Endothelial cell of umbilical vein (primary cell): ENCODE measurements at regions of chr1 and their contacts with region 1.

Region 1: DNA sequence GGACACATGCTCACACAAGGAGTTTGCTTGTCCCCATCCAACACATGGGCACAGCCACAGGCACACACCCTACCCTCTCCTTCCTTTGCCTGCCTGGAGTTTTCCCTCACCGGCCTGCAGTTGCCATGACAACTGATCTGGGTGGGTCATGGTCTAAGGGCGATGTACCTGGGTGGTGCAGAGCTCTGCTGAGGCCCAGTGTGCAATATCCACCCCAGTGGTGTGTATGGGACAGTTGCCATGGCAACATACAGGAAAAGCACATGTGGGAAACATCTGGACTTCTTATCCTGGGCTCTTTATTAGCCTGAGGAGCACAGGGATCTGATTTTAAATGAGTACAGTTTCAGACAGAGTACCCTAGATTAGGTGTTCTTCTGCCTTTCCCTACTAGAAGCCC is 98.8 kb downstream of the NAV1 start:
- DNase-seq: no peak
- H3K4me3 ChIP-seq: no peak overlapping the region
- H3K27ac ChIP-seq: peak overlapping the region; percentile 91
- H3K4me1 ChIP-seq: peaks cover 56% of the 10 kb centered on the region
- H3K27me3 ChIP-seq: no peaks in the 10 kb centered on the region
- CTCF ChIP-seq: no peak
- POLR2A ChIP-seq: no peak

Region 2: DNA sequence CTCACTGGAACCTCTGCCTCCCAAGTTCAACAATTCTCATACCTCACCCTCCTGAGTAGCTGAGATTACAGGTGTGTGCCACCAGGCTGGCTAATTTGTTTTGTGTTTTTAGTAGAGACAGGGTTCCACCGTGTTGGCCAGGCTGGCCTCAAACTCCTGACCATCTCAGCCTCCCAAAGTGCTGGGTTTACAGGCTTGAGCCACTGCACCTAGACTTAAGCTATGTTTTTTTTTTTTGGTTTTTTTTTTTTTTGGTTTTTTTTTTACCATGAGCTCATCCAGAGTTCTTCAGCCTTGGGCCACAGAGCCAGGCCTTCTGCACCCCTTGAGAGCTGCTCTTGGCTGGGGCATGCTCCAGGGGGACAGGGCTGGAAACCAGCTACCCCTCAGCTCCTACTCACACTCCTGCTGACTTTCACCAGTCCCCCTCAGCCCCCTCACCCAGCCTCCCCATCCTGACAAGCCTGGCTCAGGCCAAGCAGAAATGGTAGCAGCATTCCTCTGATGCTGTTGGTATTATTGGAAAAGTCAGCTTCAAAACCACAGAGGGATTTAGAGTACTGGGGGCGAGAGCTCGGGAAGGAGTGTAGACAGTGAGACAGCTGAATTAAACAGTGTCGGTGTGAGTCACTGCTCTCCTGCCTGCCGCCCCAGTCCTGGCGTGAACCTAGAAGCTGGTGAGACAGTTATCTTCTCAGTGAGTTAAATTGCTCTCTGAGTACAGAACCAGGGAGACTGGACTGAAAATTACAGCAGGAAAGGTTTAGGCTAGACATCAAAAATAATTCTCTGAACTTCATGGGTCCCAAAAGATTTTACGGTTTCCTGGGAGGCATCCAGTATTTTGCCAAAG is 35.0 kb before region 1 on chr1:
- CTCF ChIA-PET with region 1: interaction called, 7 read pairs
- POLR2A ChIA-PET with region 1: no interaction called
- dilution Hi-C with region 1: no loop called
- intact Hi-C with region 1: loop called (anchors 1 kb)
- DNase-seq: peak; percentile 42
- H3K4me3 ChIP-seq: no peak overlapping the region
- H3K27ac ChIP-seq: peak overlapping the region; percentile 58
- H3K4me1 ChIP-seq: peaks cover 37% of the 10 kb centered on the region
- H3K27me3 ChIP-seq: no peaks in the 10 kb centered on the region
- CTCF ChIP-seq: no peak
- POLR2A ChIP-seq: no peak

Region 3: GRCh38 chr1:201608635-201609395 is 28.9 kb before region 1 on chr1:
- CTCF ChIA-PET with region 1: interaction called, 4 read pairs
- POLR2A ChIA-PET with region 1: no interaction called
- dilution Hi-C with region 1: no loop called
- intact Hi-C with region 1: loop called (anchors 1 kb)
- DNase-seq: peak; percentile 17
- H3K4me3 ChIP-seq: no peak overlapping the region
- H3K27ac ChIP-seq: peak overlapping the region; percentile 20
- H3K4me1 ChIP-seq: peaks cover 29% of the 10 kb centered on the region
- H3K27me3 ChIP-seq: no peaks in the 10 kb centered on the region
- CTCF ChIP-seq: no peak
- POLR2A ChIP-seq: no peak

Region 4: GRCh38 chr1:201614262-201615015 is 23.2 kb before region 1 on chr1:
- CTCF ChIA-PET with region 1: interaction called, 3 read pairs
- POLR2A ChIA-PET with region 1: no interaction called
- dilution Hi-C with region 1: no loop called
- intact Hi-C with region 1: loop called (anchors 1 kb)
- DNase-seq: peak; percentile 35
- H3K4me3 ChIP-seq: no peak overlapping the region
- H3K27ac ChIP-seq: no peak overlapping the region
- H3K4me1 ChIP-seq: peaks cover 14% of the 10 kb centered on the region
- H3K27me3 ChIP-seq: no peaks in the 10 kb centered on the region
- CTCF ChIP-seq: no peak
- POLR2A ChIP-seq: no peak

Region 5: DNA sequence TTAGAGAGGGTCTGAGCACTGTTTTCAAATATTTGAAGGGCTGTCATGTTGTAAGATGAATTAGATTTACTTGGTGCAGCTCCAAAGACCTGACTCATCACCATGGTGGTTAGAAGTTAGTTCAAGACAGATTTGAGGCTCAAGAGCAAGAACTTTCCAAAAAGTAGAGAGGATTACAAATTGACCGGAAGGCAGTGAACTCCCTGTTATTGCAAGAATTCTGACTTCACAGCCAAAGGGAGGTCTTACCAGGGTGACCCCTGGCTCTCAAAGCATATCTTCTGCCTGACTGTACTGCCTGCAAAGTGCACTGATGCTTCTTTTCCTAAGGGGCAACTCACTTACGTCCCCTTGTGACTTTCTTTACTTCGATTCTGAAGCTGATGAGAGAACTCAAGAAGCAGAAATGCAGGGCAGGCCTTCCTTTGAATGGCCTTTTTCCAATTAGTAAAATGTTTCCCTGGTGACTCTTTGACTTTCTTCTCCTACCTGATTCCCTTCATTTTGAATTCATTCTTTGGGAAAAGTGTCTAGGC is 12.4 kb before region 1 on chr1:
- CTCF ChIA-PET with region 1: interaction called, 13 read pairs
- POLR2A ChIA-PET with region 1: no interaction called
- dilution Hi-C with region 1: no loop called
- intact Hi-C with region 1: no loop called
- DNase-seq: peak; percentile 46
- H3K4me3 ChIP-seq: no peak overlapping the region
- H3K27ac ChIP-seq: no peak overlapping the region
- H3K4me1 ChIP-seq: peaks cover 3% of the 10 kb centered on the region
- H3K27me3 ChIP-seq: no peaks in the 10 kb centered on the region
- CTCF ChIP-seq: no peak
- POLR2A ChIP-seq: no peak

Region 6: DNA sequence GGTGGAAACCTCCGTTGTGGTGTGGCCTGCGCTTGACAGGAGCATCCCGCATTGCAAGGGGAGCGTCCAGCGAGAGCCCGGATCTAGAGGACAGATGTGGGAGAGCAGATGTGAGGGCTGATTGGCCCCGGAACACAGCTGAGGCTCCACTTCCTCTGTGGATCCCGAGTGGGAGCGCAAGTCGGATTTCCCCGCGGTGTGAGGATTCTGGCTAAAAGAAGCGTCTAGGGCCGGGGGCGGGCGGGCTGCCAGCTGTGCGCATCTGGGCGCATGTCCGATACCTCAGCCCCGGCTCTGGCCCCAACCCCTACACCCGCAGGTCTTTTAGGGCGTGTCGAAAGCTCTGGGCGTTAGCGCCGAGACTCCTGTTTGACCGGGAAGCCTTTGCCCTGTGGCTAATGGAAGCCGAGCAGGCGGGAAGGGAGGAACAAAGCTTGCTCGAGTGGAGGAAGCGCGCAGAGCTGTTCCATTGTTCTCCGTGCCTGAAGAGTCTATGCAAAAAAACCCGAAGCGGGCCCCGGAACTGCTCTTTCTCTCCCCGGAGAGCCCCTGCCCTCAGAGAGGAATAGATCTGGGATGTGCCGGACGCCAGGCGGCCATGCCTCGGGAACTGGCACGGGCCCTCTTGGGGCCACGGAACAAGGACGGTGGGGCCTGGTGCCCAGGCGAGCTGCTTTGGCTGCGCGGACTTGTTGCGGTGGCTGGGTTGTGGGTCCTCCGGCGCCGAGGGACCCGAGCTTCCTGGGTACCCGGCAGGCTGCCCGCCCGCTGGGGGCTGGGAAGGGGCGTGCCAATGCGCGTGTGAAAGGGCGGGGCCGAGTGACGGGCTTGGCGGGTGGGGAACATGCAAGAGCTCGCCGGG is 12.3 kb after region 1 on chr1:
- CTCF ChIA-PET with region 1: interaction called, 22 read pairs
- POLR2A ChIA-PET with region 1: interaction called, 6 read pairs
- dilution Hi-C with region 1: no loop called
- intact Hi-C with region 1: loop called (anchors 1 kb)
- DNase-seq: peak; percentile 65
- H3K4me3 ChIP-seq: peak overlapping the region; percentile 30 to 57 (median 49)
- H3K27ac ChIP-seq: peak overlapping the region; percentile 50
- H3K4me1 ChIP-seq: peaks cover 30% of the 10 kb centered on the region
- H3K27me3 ChIP-seq: no peaks in the 10 kb centered on the region
- CTCF ChIP-seq: no peak
- POLR2A ChIP-seq: no peak

Region 7: DNA sequence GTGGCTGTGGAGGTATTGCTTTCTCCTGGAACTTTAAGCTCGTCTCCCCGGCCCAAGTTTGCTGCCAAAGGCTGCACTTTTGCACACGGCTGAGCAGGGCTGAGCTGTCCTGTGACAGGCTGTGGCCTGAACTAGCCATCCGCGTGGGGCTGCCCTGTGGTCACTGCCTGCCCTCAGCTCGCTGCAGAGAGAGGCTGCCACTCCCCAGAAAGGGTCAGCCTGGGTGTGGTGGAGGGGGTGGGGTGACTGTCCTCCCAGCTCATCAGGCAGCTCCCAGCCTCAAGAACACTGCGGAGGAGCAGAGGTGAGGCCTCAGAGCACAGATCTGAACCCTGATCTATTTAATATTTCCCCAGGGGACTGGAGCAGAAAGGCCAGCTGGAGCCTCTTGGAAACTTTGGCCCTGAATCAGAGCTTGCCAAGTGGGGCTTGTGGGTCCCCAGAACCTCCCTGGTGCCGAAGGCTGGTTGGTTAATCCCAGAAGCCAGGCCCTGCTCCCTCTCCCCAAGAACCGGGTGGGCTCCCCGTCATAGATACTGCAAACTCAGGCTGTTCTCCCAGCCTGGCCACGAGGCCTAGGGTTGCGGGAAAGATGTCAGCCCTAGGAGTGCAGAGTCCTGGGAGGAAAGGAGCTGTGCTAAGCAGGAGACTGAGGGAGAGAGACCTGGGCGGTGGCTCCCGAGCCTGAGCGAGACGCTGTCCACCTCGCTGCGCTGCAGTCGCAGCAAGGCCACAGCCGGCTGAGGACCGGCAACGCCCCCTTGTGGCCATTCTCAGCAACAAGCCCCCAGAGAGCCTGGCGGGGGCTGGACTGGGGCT is 66.2 kb after region 1 on chr1:
- CTCF ChIA-PET with region 1: interaction called, 8 read pairs
- POLR2A ChIA-PET with region 1: no interaction called
- dilution Hi-C with region 1: no loop called
- intact Hi-C with region 1: loop called (anchors 5 kb)
- DNase-seq: peak; percentile 73
- H3K4me3 ChIP-seq: no peak overlapping the region
- H3K27ac ChIP-seq: no peak overlapping the region
- H3K4me1 ChIP-seq: no peaks in the 10 kb centered on the region
- H3K27me3 ChIP-seq: no peaks in the 10 kb centered on the region
- CTCF ChIP-seq: peak; percentile 96 to 98
- POLR2A ChIP-seq: no peak